Calu3 (cell line): ENCODE measurements at regions of chrX and their contacts with region 1.

Region 1: DNA sequence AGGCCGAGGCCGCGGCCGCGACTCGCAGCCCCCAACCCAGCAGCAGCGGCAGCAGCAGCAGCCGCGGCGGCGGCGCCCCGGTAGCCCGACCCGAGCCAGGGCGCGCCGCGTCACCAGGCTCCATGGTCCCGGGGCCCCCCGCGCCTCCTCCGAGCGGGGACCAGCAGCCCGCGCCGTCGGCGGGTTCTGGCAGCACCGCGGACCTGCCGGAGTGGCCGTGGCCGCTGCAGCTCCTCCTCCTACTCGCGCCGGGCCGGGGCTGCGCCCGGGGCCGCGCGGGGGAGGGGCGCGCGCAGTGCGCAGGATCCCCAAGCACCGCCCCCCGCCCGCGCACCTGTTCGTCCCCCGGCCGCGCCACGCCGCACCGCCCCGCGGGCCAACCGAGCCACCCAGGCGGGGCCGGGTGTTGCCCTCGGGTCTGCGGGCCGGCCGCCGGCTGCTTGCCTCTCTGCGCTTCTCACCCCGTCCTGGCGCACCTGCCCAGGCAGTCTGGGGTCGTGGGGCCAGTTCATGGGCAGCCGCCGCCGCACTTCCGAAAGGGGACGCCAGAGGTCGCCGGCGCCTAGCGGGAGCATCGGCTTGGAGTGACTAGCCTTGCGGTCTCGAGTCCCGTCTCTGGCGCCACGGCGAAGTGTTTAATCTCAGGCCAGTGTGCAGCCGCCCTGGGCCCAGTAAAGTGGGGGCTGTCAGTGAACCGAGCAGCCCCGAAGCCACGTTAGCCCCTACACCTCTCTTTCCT is at the start of gene SLC9A7:
- DNase-seq: peak; percentile 92
- H3K4me3 Mint-ChIP-seq: peak within 1 kb of the TSS; percentile 96
- H3K27ac Mint-ChIP-seq: peak within 1 kb of the TSS; percentile 82
- H3K4me1 Mint-ChIP-seq: peaks cover 23% of the 10 kb centered on the region
- H3K27me3 Mint-ChIP-seq: no peaks in the 10 kb centered on the region
- CTCF ChIP-seq: peak; percentile 76
- total RNA-seq, gene SLC9A7: 66.4 and 83.3 TPM in 2 replicates

Region 2: DNA sequence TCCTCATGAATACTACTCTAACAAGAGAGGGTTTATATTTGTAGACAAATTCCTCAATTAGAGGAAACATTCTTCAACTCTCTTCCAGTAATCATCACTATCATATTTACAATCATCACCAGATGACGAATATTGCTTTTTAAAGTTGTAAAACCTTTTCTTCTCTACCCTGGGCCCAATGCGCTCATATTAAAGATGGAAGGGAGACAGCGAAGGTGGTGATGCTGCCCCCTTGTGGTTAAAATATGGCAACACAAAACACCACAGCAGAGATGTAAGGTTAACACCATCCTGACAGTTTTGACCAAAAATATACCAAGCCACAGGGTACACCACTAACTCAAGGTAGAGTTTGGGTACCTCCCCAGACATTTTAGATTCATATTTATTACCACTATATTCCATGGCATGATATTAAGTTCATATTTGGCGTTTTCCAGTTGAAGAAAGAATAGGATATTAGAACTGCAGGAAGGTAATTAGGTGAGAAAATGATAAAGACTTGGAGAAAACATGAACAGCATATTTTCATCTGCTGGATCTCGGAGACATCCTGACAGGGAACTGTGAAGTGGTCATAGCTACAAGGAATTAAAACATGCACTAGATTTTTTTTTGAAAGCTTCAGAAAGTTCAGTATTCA is 73.0 kb before region 1 on chrX:
- CTCF ChIA-PET with region 1: no interaction called
- intact Hi-C with region 1: loop called (anchors 10 kb)
- DNase-seq: peak; percentile 17
- H3K4me3 Mint-ChIP-seq: no peak overlapping the region
- H3K27ac Mint-ChIP-seq: peak overlapping the region; percentile 61
- H3K4me1 Mint-ChIP-seq: peaks cover 8% of the 10 kb centered on the region
- H3K27me3 Mint-ChIP-seq: no peaks in the 10 kb centered on the region
- CTCF ChIP-seq: peak; percentile 38

Region 3: DNA sequence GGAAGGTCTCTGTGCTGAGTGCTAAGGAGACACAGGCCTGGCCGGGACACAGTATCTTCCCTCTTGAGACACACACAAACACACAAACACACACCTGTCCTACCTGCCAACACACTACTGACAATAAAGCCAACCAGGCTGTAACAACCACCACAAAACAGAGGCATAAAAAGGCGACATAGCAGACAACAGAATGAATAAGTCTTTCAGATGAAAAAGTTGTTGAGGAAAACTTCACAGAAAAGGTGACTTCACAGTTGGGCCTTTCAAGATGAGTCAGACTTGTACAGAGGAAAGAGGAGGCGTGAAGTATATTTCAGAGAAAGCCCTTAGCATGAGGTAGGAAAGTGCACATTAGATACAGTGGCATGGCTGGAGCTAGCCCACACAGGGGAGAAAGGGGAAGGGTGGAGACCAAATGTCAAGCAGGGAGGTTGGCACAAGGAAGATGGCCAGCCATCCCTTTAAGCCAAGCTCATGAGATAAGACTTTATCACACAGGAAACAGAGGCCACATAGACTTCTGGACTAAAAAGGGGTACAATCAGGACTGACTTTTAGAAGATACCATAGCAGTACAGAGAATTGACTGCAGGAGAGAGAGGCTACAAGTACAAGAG is 54.2 kb before region 1 on chrX:
- CTCF ChIA-PET with region 1: no interaction called
- intact Hi-C with region 1: no loop called
- DNase-seq: no peak
- H3K4me3 Mint-ChIP-seq: no peak overlapping the region
- H3K27ac Mint-ChIP-seq: no peak overlapping the region
- H3K4me1 Mint-ChIP-seq: peaks cover 19% of the 10 kb centered on the region
- H3K27me3 Mint-ChIP-seq: no peaks in the 10 kb centered on the region
- CTCF ChIP-seq: no peak

Region 4: DNA sequence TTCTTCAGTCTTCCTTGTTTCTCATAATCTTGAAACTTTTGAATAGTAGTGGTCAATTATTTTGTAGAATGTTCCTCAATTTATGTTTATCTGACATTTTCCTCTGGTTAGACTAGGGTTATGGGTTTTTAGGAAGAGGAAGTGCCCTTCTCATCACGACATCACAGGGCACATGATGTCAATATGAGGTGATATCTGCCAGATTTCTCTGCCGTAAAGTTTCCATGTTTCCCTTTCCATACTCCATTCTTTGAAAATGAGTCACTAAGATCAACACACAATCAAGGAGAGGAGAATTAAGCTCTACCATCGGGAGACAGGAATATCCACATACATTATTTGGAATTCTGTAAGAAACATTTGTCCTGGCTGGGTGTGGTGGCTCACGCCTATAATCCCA is 106.2 kb after region 1 on chrX:
- CTCF ChIA-PET with region 1: no interaction called
- intact Hi-C with region 1: no loop called
- DNase-seq: no peak
- H3K4me3 Mint-ChIP-seq: no peak overlapping the region
- H3K27ac Mint-ChIP-seq: peak overlapping the region; percentile 27
- H3K4me1 Mint-ChIP-seq: peaks cover 7% of the 10 kb centered on the region
- H3K27me3 Mint-ChIP-seq: no peaks in the 10 kb centered on the region
- CTCF ChIP-seq: no peak

Region 5: GRCh38 chrX:47283015-47283771 is 524.1 kb after region 1 on chrX:
- CTCF ChIA-PET with region 1: no interaction called
- intact Hi-C with region 1: no loop called
- DNase-seq: no peak
- H3K4me3 Mint-ChIP-seq: no peak overlapping the region
- H3K27ac Mint-ChIP-seq: no peak overlapping the region
- H3K4me1 Mint-ChIP-seq: no peaks in the 10 kb centered on the region
- H3K27me3 Mint-ChIP-seq: no peaks in the 10 kb centered on the region
- CTCF ChIP-seq: no peak